Sigmoid colon (tissue), 7 donors: ENCODE measurements at regions of chr9 and their contacts with region 1.

Region 1: GRCh38 chr9:136944519-136945279 is at the starts of genes C8G and FBXW5:
- DNase-seq: peak; percentile 97
- H3K4me3 ChIP-seq: peak within 1 kb of the TSS; percentile 74 to 99 (median 88)
- H3K27ac ChIP-seq: peak within 1 kb of the TSS; percentile 84 to 96 (median 92)
- H3K4me1 ChIP-seq: peaks cover 0 to 35% (median 26%) of the 10 kb centered on the region in 4 donors
- H3K27me3 ChIP-seq: no peaks in the 10 kb centered on the region
- CTCF ChIP-seq: peak; percentile 94 to 99 (median 96)
- EP300 ChIP-seq: no peak
- POLR2A ChIP-seq: no peak
- total RNA-seq, gene C8G: not detected
- total RNA-seq, gene FBXW5: 153 to 202 (median 171) TPM

Region 2: DNA sequence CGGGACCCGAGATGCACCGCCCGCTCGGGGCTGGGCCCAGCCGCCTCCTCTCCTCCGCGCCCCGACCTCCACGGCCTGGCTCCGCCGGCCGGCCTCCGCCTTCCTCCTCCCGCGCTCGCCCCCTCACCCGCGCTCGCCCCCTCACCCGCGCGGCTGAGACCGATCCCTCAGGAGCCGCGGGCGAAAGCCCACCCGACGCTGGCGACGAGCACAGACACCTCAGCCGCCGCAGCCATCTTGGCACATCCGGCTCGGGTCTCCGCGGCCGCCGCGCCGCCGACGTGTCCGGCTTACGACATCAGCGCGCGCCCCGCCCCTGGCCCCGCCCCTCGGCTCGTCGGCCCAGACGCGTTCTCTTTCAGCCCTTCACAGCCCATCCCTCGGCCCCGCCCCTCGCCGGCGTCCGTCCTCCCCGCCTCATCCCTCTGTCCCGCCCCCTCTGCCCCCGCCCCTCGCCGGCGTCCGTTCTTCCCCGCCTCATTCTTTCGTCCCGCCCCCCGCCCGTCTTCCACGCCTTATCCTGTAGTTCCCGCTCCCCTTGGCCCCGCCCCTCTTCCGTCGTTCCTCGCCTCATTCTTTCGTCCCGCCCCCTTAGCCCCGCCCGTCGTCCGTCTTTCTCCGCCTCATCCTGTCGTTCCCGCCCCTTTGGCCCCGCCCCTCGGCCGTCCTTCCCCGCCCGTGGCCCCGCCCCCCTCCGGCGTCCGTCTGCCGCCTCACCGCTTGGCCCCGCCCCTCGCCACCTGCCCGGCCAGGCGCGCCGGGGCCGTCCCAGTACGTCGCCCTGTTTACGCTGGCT is 461.7 kb before region 1 on chr9 and contains the start of gene SEC16A:
- intact Hi-C with region 1: loop called (anchors 5 kb)
- DNase-seq: peak; percentile 100
- H3K4me3 ChIP-seq: peak within 1 kb of the TSS; percentile 85 to 98 (median 92)
- H3K27ac ChIP-seq: peak within 1 kb of the TSS; percentile 99 to 100 (median 99)
- H3K4me1 ChIP-seq: peaks cover 0 to 25% (median 23%) of the 10 kb centered on the region in 4 donors
- H3K27me3 ChIP-seq: no peaks in the 10 kb centered on the region
- CTCF ChIP-seq: no peak
- EP300 ChIP-seq: no peak
- POLR2A ChIP-seq: peak; percentile 83
- total RNA-seq, gene SEC16A: 22.9 to 33.9 (median 30.2) TPM

Region 3: DNA sequence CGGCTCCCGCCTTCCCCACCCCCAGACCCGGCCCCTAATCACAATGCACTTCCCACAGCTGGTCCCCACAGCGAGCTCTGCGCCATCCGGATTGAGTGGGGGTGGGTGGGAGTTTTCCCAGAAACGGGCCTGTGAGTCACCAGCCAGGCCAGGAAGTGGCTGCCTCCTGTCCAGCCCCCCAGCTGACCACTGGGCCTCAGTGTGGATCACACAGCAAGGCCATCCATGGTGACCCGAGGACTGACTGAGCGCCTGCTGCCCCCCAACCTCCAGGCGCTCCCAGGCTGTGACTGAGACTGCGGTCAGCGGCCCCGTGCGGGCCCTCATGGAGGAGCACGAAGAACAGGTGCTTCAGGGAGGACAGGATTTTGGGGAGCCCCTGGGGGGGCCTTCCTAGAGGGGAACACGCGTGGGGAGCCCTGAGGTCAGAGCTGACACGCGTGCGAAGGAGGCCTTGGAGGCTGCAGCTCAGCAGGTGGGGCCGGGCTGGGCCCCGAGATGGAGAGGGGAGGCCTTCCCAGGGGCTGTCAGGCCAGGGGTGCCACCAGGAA is 330.3 kb before region 1 on chr9:
- intact Hi-C with region 1: no loop called
- DNase-seq: no peak
- H3K4me3 ChIP-seq: no peak overlapping the region
- H3K27ac ChIP-seq: peak overlapping the region in 3 of 4 donors; percentile 31 to 56 (median 37)
- H3K4me1 ChIP-seq: peaks cover 0 to 18% (median 10%) of the 10 kb centered on the region in 4 donors
- H3K27me3 ChIP-seq: no peaks in the 10 kb centered on the region
- CTCF ChIP-seq: no peak
- EP300 ChIP-seq: no peak
- POLR2A ChIP-seq: no peak

Region 4: DNA sequence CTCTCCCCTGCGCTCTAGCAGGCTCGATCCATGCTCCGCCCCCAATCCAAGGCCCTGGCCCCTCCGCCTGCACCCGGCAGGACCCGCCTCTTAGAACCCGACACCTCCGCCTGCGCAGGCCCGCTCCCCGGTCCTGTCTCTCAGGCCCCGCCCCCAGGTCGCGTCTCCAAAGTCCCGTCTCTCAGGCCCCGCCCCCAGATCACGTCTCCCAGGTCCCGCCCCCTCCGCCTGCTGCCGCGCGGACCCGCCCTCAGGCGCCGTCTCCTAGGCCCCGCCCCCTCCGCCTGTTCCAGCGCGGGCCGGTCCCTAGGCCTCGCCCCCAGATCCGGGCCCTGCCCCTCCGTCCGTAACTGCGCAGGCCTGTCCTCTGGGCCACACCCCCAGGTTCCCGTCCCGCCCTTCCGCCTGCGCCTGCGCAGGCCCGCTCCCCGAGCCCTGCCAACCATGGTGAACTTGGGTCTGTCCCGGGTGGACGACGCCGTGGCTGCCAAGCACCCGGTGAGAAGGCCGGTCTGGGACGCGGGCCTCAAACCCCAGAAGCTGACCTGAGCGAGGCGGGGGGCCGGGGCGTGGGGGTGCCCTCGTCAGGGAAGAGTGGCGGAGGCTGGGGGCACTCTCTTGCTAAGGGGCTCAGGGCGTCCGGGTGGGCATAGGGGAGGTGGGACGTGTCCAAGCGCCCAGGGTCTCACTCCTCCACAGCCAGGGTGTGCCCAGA is 153.6 kb before region 1 on chr9 and contains the start of gene TMEM141:
- intact Hi-C with region 1: loop called (anchors 1 kb)
- DNase-seq: peak; percentile 100
- H3K4me3 ChIP-seq: peak within 1 kb of the TSS; percentile 43 to 76 (median 68)
- H3K27ac ChIP-seq: peak within 1 kb of the TSS; percentile 84 to 95 (median 90)
- H3K4me1 ChIP-seq: peaks cover 0 to 22% (median 20%) of the 10 kb centered on the region in 4 donors
- H3K27me3 ChIP-seq: peaks cover 0 to 5% (median 0%) of the 10 kb centered on the region in 3 donors
- CTCF ChIP-seq: no peak
- EP300 ChIP-seq: no peak
- POLR2A ChIP-seq: peak in 1 of 2 donors; percentile 84
- total RNA-seq, gene TMEM141: 37.5 to 84.7 (median 63.2) TPM

Region 5: GRCh38 chr9:136865735-136866103 is 79.0 kb before region 1 on chr9:
- intact Hi-C with region 1: loop called (anchors 1 kb)
- DNase-seq: peak; percentile 74
- H3K4me3 ChIP-seq: peak overlapping the region; percentile 93 to 100 (median 100)
- H3K27ac ChIP-seq: peak overlapping the region; percentile 90 to 97 (median 94)
- H3K4me1 ChIP-seq: peaks cover 0 to 29% (median 21%) of the 10 kb centered on the region in 4 donors
- H3K27me3 ChIP-seq: no peaks in the 10 kb centered on the region
- CTCF ChIP-seq: no peak
- EP300 ChIP-seq: no peak
- POLR2A ChIP-seq: no peak

Region 6: DNA sequence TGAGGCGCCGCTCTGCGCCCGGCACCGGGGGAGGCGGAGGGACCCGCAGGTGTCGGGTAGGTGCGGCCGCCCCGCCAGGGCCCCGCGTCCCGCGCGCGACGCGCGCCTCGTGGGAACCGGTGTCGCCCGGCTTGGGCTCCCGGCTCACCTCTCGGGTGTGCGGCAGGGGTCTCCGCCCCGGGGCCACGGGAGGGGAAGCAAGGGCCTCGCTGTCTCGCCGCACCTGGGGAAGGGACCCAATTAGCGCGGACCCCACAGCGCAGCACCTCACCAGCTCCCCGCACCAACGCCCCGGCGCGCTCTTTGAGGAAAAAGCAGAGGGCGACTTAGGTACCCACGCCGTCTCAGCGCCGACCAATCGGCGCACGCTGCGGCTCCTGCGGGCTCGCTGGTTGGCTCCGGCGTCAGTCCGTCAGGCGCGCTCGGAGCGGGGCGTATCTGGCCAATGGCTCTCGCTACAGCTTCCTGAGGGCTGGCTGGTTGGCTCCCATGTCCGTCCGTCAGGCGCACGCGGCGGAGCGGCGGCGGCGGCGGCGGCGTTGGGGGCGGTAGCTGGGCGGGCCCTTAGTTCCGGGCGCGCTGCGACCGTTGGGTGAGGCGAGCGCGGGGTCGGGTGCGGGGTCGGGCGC is 58.6 kb before region 1 on chr9 and contains the start of gene TRAF2:
- intact Hi-C with region 1: loop called (anchors 5 kb)
- DNase-seq: peak; percentile 99
- H3K4me3 ChIP-seq: peak within 1 kb of the TSS; percentile 70 to 99 (median 98)
- H3K27ac ChIP-seq: peak within 1 kb of the TSS; percentile 85 to 91 (median 88)
- H3K4me1 ChIP-seq: peaks cover 0 to 38% (median 32%) of the 10 kb centered on the region in 4 donors
- H3K27me3 ChIP-seq: no peaks in the 10 kb centered on the region
- CTCF ChIP-seq: no peak
- EP300 ChIP-seq: no peak
- POLR2A ChIP-seq: no peak
- total RNA-seq, gene TRAF2: 1.8 to 5.5 (median 3.9) TPM

Region 7: DNA sequence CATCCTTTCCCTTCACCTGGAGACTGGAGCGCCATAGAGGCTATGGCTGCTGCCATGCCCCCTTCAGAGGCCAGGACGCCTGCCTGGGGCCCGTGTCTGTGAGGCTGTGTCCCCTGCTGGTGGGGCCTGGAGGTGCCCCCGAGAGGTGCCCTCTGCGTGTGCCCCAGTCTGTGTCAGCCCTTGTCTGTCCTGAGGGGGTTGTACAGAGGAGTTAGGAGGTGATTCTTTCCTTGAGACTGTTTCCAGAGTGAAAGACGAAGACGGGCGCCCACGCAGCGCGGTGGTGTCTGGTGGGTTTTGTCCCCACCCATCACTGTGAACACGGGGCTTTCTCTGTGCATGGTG is 33.8 kb before region 1 on chr9:
- intact Hi-C with region 1: no loop called
- DNase-seq: no peak
- H3K4me3 ChIP-seq: no peak overlapping the region
- H3K27ac ChIP-seq: no peak overlapping the region
- H3K4me1 ChIP-seq: no peaks in the 10 kb centered on the region
- H3K27me3 ChIP-seq: no peaks in the 10 kb centered on the region
- CTCF ChIP-seq: no peak
- EP300 ChIP-seq: no peak
- POLR2A ChIP-seq: no peak

Region 8: DNA sequence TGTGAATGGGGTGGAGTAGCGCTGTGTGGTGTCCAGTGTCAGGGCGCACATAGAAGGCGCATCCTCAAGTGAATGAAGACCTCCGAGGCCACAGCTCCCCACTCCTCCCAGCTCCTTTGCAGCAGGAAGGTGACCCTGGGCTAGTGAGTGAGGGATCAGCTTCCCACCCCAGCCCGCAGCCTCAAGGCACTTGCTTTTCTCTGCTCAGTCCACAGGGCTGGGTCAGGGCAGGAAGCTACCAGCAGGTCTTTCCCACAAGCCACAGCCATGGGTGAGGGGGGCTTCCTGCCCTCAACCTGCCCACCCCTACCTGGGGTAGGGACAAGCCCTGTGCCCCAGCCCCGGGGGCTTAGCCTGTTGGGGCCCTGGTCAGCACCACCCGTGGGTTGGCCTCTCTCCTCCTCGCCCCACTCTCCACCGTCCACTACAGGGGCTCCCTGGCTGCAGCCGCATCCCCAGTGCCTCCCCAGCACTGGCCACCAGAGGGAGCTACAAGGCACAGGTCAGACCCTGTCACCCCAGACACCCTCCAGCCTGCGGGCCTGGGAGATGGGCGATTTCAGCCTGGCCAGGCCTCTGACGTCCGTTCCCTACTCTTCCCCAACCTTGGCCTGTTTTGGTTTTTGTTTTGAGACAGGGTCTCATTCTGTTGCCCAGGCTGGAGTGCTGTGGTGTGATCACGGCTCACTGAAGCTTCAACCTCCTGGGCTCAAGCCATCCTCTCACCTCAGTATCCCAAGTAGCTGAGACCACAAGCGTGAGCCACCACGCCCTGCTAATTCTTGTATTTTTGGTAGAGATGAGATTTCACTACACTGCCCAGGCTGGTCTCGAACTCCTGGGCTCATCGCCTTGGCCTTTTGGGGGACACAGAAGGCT is 84.6 kb after region 1 on chr9:
- intact Hi-C with region 1: loop called (anchors 2 kb)
- DNase-seq: peak; percentile 84
- H3K4me3 ChIP-seq: peak overlapping the region in 3 of 4 donors; percentile 59 to 67 (median 63)
- H3K27ac ChIP-seq: peak overlapping the region in 2 of 4 donors; percentile 3 to 61
- H3K4me1 ChIP-seq: peaks cover 0 to 36% (median 35%) of the 10 kb centered on the region in 4 donors
- H3K27me3 ChIP-seq: peaks cover 0 to under 1% (median 0%) of the 10 kb centered on the region in 3 donors
- CTCF ChIP-seq: peak; percentile 68 to 93 (median 86)
- EP300 ChIP-seq: no peak
- POLR2A ChIP-seq: no peak

Region 9: DNA sequence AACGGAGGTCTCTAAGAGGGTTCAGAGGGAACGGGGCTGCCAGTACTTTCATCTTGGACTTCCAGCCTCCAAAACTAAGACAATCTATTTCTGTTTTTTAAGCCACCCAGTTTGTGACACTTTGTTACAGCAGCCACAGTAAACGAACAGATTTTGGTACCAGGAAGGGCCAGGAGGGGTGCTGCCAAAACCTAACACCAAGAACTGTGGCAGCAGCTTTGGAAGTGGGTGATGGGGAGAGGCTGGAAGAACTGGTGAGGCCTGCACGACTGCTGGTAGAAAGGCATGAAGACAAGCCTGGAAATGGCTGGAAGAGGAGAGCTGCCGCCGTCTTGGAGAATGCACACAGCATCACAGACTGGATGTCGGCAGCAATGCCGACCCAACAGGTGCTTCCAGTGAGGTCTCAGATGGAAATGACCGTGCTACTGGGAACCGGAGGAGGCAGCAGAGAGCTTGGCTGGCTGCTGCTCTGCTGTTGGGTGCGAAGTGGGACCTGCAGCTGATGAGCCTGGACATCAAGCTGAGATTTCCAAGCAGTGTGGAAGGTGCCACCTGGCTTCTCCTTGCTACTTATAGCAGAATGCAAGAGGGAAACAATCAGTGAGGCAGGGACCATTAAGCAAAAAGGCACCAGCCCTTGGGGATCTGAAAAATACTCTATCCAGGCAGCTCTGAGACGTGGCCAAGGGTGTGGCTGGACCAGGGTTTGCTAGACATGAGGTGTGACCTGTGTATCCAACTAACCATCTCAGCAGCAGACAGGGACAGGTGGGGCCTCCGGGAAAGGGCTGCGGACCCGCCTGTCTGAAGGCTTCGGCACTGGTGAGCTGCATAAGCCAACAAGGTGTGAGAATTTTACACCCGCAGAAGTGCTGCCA is 231.8 kb after region 1 on chr9:
- intact Hi-C with region 1: no loop called
- DNase-seq: no peak
- H3K4me3 ChIP-seq: no peak overlapping the region
- H3K27ac ChIP-seq: no peak overlapping the region
- H3K4me1 ChIP-seq: no peaks in the 10 kb centered on the region
- H3K27me3 ChIP-seq: peaks cover 0 to 23% (median 0%) of the 10 kb centered on the region in 3 donors
- CTCF ChIP-seq: peak in 2 of 4 experiments; percentile 14 to 28
- EP300 ChIP-seq: no peak
- POLR2A ChIP-seq: no peak